MCF 10A (cell line): ENCODE measurements at regions of chr12 and their contacts with region 1.

Region 1: DNA sequence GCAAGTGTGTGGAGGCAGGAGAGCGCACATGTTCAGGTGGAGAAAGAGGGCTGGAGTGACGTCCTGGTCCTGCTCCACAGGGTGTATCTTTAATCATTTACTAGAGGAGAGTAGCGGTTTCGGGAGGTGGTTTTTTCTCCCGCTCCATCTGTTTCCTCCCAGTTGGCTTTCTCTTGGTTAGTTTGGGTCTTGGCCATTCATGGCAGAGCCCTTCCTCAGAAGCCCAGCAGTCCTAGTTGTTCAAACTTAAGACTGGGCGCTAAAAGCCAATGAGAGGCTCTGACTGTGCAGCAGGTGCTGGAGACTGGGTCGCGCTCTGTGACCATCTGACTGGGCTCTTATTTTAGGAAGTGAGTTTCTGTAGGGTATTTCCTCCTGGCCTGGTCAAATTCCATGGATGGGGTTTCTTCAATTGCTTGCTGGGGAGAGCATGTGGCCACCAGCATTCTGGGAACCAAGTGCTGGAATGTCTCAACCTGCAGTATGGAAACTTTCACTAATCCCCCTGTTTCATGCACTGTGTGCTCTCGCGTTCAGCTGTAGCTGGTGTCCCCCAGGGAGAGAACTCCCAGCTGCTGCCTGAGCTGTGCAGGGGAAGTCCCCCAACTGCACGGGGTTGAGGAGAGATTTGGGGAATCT is 27.4 kb upstream of the TSPAN9 start:
- DNase-seq: no peak
- H3K4me3 Mint-ChIP-seq: no peak overlapping the region
- H3K27ac Mint-ChIP-seq: no peak overlapping the region
- H3K4me1 Mint-ChIP-seq: peaks cover 17% of the 10 kb centered on the region
- H3K27me3 Mint-ChIP-seq: peaks cover 26% of the 10 kb centered on the region
- CTCF ChIP-seq: no peak

Region 2: GRCh38 chr12:2944401-2945047 is 105.2 kb before region 1 on chr12:
- CTCF ChIA-PET with region 1: no interaction called
- POLR2A ChIA-PET with region 1: no interaction called
- intact Hi-C with region 1: no loop called
- DNase-seq: peak; percentile 68
- H3K4me3 Mint-ChIP-seq: peak overlapping the region; percentile 70
- H3K27ac Mint-ChIP-seq: no peak overlapping the region
- H3K4me1 Mint-ChIP-seq: no peaks in the 10 kb centered on the region
- H3K27me3 Mint-ChIP-seq: no peaks in the 10 kb centered on the region
- CTCF ChIP-seq: peak; percentile 84

Region 3: DNA sequence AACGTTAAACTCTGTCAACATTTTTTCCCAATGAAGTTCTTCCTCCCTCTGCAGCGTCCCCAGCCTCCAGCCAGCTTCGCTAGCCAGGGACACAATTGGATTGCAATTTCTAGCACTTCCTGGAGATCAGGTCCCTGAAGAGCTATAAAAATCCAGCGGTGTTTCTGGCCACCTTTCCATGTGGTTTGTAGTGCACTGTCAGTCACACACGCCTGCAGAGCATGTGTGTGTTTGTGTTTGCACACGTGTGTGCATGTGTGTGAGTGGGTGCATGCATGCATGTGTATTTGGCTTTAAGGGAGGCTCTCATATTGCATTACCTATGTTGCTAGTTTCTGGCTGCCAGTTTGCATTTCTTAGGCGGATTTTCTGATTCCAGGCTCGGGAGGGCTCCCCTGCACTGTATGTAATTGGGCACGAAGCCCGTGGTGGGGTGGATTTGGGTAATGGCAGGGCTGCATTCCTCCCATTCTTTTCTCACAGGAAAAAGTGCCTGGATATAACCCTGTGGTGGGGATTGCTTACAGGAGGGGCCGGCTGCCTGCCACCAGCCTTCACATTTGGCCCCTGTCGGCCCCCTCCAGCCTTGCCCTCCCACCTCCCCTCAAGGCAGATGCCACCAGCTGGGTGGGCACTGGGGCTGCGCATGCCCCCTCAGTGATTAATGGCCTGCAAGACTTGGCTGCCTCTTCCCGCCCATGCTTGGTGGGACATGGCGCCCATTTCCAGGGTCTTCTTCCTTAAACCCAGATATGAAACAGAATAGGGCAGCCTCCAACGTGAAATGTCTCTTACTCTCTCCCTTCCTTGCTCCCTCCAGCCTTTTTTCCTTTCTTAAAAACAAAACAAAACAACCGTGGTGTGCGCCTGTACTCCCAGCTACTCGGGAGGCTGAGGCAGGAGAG is 101.5 kb after region 1 on chr12:
- CTCF ChIA-PET with region 1: interaction called, 10 read pairs
- POLR2A ChIA-PET with region 1: interaction called, 3 read pairs
- intact Hi-C with region 1: no loop called
- DNase-seq: no peak
- H3K4me3 Mint-ChIP-seq: no peak overlapping the region
- H3K27ac Mint-ChIP-seq: no peak overlapping the region
- H3K4me1 Mint-ChIP-seq: no peaks in the 10 kb centered on the region
- H3K27me3 Mint-ChIP-seq: no peaks in the 10 kb centered on the region
- CTCF ChIP-seq: no peak